ENCODE measurements at regions of chr18 and their contacts with region 1.

Region 1: DNA sequence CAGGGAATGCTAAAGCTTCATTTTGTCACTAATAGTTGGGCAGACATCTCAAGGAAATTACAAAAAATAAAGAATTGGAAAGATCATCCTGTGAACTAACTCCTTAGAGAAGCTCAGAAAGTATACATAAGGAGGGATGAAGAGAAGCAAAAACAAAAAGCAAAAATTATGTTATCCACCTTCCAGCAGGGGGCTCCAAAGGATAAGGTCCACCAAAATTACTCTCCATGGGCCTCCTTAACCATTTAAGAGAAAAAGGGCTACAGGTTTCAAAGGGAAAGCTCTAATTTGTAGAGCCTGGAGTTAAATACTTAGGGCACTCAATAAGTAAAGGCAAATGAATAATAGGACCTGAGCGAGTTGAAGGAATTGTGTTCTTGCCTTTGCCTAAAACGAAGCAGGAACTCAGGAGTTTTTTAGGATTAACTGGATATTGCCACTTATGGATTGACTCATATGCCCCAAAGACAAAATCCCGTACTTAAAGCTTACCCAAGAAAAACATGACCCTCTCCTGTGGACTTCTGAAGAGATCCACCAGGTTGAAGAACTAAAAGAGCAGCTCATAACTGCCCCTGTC is 1167.9 kb downstream of the DSC3 start:
- DNase-seq: peak; percentile 46
- H3K4me3 ChIP-seq: no peak overlapping the region
- H3K27ac ChIP-seq: no peak overlapping the region
- H3K4me1 ChIP-seq: no peaks in the 10 kb centered on the region
- H3K27me3 ChIP-seq: no peaks in the 10 kb centered on the region

Region 2: DNA sequence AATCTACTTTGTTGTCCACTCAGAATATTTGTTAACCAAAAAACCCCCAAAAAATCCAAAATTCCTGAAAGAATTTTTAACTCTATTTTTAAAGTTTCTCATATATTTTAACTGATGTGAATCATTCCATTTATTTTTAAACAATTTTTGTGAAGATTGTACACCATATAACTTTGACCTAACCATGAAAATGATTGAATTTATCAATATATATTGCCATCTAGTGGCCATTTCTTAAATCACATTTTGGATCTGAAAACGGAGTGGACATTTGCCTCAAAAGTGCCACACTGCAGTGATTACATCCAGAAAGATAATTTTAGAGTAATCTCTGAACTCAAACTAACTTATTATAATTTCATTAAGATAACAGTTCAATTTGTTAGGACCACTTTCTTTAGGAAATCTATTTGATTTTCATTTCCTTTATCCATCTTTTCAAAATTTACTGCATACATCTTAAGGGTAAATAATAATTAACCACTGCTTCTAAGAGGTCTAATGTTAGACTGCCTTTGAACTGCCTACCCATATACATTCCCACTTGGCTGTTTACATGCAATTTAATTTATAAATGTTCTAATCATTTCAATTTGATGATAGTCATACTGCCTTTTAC is 1096.8 kb after region 1 on chr18:
- in situ Hi-C with region 1: loop called (anchors 25 kb)
- DNase-seq: peak; percentile 51
- H3K4me3 ChIP-seq: no peak overlapping the region
- H3K27ac ChIP-seq: no peak overlapping the region
- H3K4me1 ChIP-seq: no peaks in the 10 kb centered on the region
- H3K27me3 ChIP-seq: no peaks in the 10 kb centered on the region